ENCODE measurements at regions of chr16 and their contacts with region 1.

Region 1: GRCh38 chr16:7013990-7014389 is 318.7 kb upstream of the RBFOX1 start:
- DNase-seq: no peak
- H3K4me3 ChIP-seq: no peak overlapping the region
- H3K27ac ChIP-seq: no peak overlapping the region
- H3K4me1 ChIP-seq: no peaks in the 10 kb centered on the region
- H3K27me3 ChIP-seq: no peaks in the 10 kb centered on the region
- CTCF ChIP-seq: no peak
- POLR2A ChIP-seq: no peak

Region 2: DNA sequence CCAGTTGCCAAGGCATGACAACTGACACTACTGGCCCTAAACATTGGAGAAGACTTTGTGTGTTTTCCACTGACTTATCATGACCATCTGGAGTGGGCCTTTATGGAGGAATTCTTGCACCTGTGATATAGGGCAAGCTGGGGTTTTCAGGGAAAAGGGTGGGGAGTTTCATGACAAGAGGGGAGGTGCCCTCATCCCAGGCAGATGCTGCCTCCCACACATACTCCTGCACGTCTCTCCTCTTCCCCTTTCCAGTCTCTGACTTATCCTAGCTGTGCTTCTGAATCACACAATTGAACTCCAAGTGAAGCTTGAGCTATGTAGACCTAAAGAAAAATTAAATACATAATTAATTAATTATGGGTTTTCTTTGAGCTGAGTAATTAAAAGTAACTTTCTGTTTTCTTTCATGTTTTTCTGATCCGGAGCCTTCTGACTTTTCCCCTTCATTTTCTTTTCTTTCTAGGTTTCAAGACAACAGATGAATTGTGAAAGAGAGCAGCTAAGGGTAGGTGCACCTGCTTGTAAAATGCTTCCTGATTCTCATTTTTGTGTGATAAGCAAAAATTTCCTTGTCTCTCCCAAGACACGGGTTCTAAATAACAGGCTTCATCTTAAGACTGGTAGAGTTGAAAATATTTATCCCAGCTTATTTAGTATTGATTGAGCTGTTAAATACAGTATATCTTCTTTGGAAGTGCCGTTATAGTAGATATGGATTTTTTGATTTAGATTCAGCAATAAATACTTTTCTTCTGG is 37.8 kb after region 1 on chr16:
- intact Hi-C with region 1: loop called (anchors 5 kb)
- DNase-seq: no peak
- H3K4me3 ChIP-seq: no peak overlapping the region
- H3K27ac ChIP-seq: no peak overlapping the region
- H3K4me1 ChIP-seq: no peaks in the 10 kb centered on the region
- H3K27me3 ChIP-seq: no peaks in the 10 kb centered on the region
- CTCF ChIP-seq: no peak
- POLR2A ChIP-seq: no peak